ENCODE measurements at regions of chr14 and their contacts with region 1.

Region 1: GRCh38 chr14:37329189-37330001 is 131.7 kb downstream of the MIPOL1 start:
- DNase-seq: peak; percentile 92
- ATAC-seq: peak; percentile 98
- H3K4me3 ChIP-seq: peak overlapping the region in 2 of 3 experiments; percentile 23 to 26; a peak in 3 of 6 replicates
- H3K27ac ChIP-seq: peak overlapping the region; percentile 57
- H3K4me1 ChIP-seq: peaks cover 30% of the 10 kb centered on the region
- H3K27me3 ChIP-seq: no peaks in the 10 kb centered on the region
- CTCF ChIP-seq: no peak
- EP300 ChIP-seq: peak; percentile 41 to 91; a peak in 3 of 4 replicates
- POLR2A ChIP-seq: no peak
- RAD21 ChIP-seq: no peak

Region 2: GRCh38 chr14:37466623-37467088 is 137.3 kb after region 1 on chr14:
- CTCF ChIA-PET with region 1: no interaction called
- POLR2A ChIA-PET with region 1: interaction called, 5 read pairs
- in situ Hi-C with region 1: no loop called
- intact Hi-C with region 1: loop called (anchors 1 kb)
- DNase-seq: peak; percentile 100
- ATAC-seq: peak; percentile 97
- H3K4me3 ChIP-seq: peak overlapping the region in 1 of 3 experiments; percentile 12; a peak in 2 of 6 replicates
- H3K27ac ChIP-seq: peak overlapping the region; percentile 81
- H3K4me1 ChIP-seq: peaks cover 46% of the 10 kb centered on the region
- H3K27me3 ChIP-seq: no peaks in the 10 kb centered on the region
- CTCF ChIP-seq: no peak
- EP300 ChIP-seq: peak; percentile 100
- POLR2A ChIP-seq: no peak
- RAD21 ChIP-seq: peak; percentile 67

Region 3: GRCh38 chr14:37729218-37729617 is 399.8 kb after region 1 on chr14:
- CTCF ChIA-PET with region 1: no interaction called
- POLR2A ChIA-PET with region 1: no interaction called
- in situ Hi-C with region 1: no loop called
- intact Hi-C with region 1: no loop called
- DNase-seq: no peak
- ATAC-seq: no peak
- H3K4me3 ChIP-seq: no peak overlapping the region
- H3K27ac ChIP-seq: no peak overlapping the region
- H3K4me1 ChIP-seq: no peaks in the 10 kb centered on the region
- H3K27me3 ChIP-seq: no peaks in the 10 kb centered on the region; a peak in 1 of 5 replicates
- CTCF ChIP-seq: no peak
- EP300 ChIP-seq: no peak
- POLR2A ChIP-seq: no peak
- RAD21 ChIP-seq: no peak